RWPE1 (cell line): ENCODE measurements at regions of chr9 and their contacts with region 1.

Region 1: DNA sequence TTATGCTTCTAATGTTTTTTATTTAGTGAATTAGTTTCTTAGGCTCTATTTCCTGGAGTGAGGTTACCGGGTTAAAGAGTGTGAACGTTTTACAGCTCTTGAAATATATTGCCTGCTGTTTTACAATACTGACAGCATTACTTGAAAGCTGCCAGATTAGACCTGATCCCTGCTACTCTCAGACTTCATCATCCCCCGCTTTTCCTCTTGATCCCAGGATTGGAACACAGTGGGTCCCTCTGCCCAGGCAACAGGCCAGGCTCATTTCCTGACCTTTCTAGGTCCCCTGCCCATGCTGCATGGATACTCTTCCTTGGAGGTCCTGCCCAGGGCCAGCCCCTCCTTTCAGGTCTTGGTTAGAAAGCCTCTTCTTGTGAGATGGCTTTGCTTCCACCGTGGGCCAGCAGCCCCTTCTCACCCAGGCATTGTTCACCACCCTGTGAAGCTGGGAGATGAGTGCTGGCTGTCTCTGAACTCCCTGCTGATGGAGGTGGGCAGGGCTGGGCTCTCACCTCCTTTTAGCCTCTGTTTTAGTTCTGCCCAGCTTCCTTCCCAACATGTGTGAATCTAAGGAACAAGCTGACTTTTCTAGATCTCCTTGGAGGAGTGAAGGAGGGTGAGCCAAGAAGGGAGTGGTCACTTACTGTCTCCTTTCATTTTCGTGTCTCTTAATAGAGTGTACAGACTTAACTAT is 15.5 kb upstream of the FAM120AOS start:
- DNase-seq: peak; percentile 38
- H3K27ac ChIP-seq: peak overlapping the region; percentile 77
- CTCF ChIP-seq: no peak

Region 2: GRCh38 chr9:92170848-92171247 is 1298.1 kb before region 1 on chr9:
- CTCF ChIA-PET with region 1: interaction called, 10 read pairs
- POLR2A ChIA-PET with region 1: no interaction called
- DNase-seq: no peak
- H3K27ac ChIP-seq: no peak overlapping the region
- CTCF ChIP-seq: no peak

Region 3: DNA sequence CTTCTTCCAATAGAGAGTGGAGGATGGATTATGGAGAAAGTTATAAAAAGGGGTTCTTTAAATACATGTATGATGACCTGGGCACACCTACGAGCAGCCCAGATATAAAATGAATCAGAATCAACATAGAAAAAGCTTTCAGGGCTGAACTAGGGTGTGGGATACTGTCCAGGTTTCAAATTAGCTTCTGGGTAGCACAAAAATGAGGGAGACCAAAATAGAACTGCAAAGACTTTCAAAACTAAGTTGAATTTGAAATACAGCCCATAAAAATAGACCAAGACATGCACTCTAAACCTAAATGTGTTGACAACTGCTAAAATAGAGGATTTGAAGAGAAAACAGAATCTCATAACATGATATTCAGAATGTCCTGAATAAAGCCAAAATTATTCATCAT is 608.0 kb before region 1 on chr9:
- CTCF ChIA-PET with region 1: no interaction called
- POLR2A ChIA-PET with region 1: no interaction called
- DNase-seq: no peak
- H3K27ac ChIP-seq: no peak overlapping the region
- CTCF ChIP-seq: no peak

Region 4: DNA sequence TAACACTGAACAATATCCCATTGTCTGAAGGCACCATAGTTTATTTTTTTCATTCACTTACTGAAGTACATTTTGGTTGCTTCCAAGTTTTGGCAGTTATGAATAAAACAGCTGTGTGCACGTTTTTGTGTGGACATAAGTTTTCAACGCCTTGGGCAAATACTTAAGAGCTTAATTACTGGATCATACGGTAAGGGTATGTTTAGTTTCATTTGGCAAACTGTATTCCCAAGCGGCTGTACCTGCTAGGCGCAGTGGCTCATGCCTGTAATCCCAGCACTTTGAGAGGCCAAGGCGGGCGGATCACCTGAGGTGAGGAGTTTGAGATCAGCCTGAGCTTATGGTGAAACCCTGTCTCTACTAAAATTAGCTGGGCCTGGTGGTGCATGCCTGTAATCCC is 81.1 kb before region 1 on chr9:
- CTCF ChIA-PET with region 1: no interaction called
- POLR2A ChIA-PET with region 1: no interaction called
- DNase-seq: no peak
- H3K27ac ChIP-seq: no peak overlapping the region
- CTCF ChIP-seq: no peak

Region 5: GRCh38 chr9:93520523-93520922 is 51.6 kb after region 1 on chr9:
- CTCF ChIA-PET with region 1: no interaction called
- POLR2A ChIA-PET with region 1: no interaction called
- DNase-seq: no peak
- H3K27ac ChIP-seq: no peak overlapping the region
- CTCF ChIP-seq: no peak

Region 6: DNA sequence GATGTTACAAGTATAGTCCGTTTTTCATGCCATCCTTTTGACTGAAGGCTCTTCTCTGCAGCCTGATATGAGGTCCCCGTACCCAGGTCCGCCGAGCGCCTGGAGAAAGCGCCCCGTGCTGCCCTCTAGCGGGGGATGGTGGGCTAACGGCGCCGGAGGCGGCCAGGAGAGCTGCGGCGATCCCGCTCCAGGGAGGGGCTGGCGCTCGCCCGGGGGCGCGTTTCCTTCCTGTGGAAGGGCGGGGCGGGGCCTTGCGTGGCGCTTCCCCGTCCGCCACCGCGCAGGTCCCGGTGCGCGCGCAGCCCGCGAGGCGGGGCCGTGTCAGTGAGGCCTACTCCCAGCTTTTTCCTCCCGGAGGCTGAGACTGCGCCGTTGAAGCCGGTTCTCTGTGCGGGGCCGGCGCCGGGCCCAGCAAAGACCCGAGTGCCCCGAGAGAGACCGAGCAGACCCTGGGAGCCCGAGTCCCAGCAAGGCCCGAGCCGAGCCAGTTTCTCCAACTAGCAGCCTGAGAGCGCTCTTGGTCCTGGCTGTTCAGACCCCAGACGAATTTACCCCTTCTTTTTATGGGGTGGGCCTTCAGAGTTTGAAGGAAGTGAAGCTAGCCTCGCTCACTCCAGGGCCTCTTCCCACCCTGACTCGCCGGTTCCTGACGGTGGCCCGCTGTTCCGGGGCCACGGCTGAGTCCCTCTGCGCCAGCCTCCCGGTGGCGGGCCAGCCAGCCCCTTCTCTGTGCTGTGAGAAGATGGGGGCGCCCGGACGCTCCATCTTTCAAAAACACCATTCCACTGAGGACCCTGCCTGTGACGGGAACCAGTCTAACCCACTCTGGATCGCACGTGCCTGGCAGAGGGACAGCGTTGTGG is 97.7 kb after region 1 on chr9:
- CTCF ChIA-PET with region 1: interaction called, 10 read pairs
- POLR2A ChIA-PET with region 1: no interaction called
- DNase-seq: peak; percentile 99
- H3K27ac ChIP-seq: peak overlapping the region; percentile 86
- CTCF ChIP-seq: peak; percentile 100

Region 7: DNA sequence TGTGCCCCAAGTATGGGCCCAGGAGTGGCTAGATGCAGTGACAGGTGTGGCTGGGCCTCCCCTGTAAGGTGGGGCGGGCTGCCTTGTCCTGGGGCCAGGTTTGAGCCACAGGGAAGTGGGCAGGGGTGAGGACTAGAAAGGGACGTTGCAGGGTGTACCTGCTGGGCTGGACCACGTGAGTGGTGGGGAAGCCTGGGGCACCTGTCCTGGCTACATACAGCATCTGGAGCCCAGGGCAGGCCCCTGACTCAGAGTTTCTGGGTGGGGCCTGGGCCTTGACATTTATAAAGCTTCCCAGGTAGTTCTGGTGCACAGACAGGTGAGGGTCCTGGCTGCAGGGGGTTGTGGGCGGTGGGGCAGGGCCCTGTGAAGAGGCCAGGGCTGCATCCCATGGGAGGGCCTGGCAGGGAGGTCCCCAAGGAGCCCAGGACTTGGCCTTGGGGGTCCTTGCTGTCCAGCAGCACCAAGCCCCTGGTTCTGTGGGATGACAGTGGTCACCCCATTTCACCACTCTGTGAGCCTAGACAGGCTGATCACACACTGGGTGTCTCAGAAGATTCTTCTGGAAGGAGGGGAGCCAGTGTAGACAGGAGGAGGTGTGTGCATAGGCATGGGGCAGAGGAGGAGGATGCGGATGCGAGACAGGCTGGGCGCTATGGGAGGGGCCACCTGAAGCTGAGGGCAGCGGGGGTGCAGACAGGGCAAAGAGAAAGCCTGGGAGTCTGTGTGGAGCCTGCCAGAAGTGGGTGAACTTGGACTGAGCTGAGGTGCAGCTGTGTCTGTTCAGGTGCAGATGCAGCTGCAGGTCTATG is 201.5 kb after region 1 on chr9:
- CTCF ChIA-PET with region 1: no interaction called
- POLR2A ChIA-PET with region 1: no interaction called
- DNase-seq: no peak
- H3K27ac ChIP-seq: no peak overlapping the region
- CTCF ChIP-seq: no peak